CD4-positive, alpha-beta T cell (primary cell): ENCODE measurements at regions of chr9 and their contacts with region 1.

Region 1: DNA sequence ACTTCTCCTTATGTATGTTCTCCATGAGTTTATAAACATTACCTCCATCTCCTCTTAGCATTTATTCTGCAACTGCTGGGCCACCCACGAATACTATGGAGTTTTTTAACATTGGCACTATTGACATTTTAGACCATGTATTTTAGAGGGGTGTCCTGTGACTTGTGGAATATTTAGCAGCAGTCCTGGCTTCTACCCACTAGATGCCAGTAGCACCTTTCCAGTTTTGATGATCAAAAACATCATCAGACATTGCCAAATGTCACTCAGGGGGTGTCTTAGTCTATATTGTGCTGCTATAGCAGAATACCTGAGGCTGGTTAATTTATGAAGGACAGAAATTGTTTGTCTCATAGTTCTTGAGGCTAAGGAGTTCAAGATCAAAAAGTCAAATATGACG is 187.5 kb upstream of the RORB start:
- DNase-seq: no peak
- ATAC-seq: no peak
- H3K4me3 ChIP-seq: no peak overlapping the region
- H3K4me3 Mint-ChIP-seq: no peak overlapping the region
- H3K27ac ChIP-seq: no peak overlapping the region
- H3K27ac Mint-ChIP-seq: no peak overlapping the region
- H3K4me1 ChIP-seq: no peaks in the 10 kb centered on the region
- H3K4me1 Mint-ChIP-seq: no peaks in the 10 kb centered on the region
- H3K27me3 ChIP-seq: no peaks in the 10 kb centered on the region
- H3K27me3 Mint-ChIP-seq: no peaks in the 10 kb centered on the region
- CTCF ChIP-seq: no peak

Region 2: DNA sequence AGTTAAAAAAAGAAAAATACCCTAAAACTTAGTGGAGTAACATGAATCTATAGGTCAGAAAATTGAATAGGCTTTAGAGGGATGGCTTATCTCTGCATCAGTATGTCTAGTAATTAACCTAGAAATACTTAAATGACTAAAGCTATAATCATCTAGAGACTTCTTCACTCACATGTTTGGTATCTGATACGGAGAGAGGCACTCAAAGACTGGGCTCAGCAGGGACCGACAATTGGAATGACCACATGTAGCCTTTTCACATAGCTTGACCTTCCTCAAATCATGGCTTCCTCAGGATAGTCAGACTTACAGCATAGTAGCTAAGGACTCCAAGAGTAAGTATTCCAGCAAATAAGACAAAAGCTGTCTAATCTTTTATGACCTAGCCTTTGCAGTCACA is 82.2 kb after region 1 on chr9:
- CTCF ChIA-PET with region 1: interaction called, 4 read pairs
- POLR2A ChIA-PET with region 1: no interaction called
- intact Hi-C with region 1: loop called in 1 of 2 experiments (anchors 10 kb)
- DNase-seq: no peak
- ATAC-seq: no peak
- H3K4me3 ChIP-seq: no peak overlapping the region
- H3K4me3 Mint-ChIP-seq: no peak overlapping the region
- H3K27ac ChIP-seq: no peak overlapping the region
- H3K27ac Mint-ChIP-seq: no peak overlapping the region
- H3K4me1 ChIP-seq: no peaks in the 10 kb centered on the region
- H3K4me1 Mint-ChIP-seq: no peaks in the 10 kb centered on the region
- H3K27me3 ChIP-seq: no peaks in the 10 kb centered on the region
- H3K27me3 Mint-ChIP-seq: no peaks in the 10 kb centered on the region
- CTCF ChIP-seq: no peak